Left cardiac atrium (tissue), 4 donors: ENCODE measurements at regions of chr13 and their contacts with region 1.

Region 1: GRCh38 chr13:40069173-40070044 is 413.9 kb downstream of the COG6 start:
- DNase-seq: peak; percentile 81
- ATAC-seq: peak; percentile 92 to 96

Region 2: GRCh38 chr13:40580566-40581276 is 511.3 kb after region 1 on chr13:
- intact Hi-C with region 1: loop called in 1 of 2 experiments (anchors 5 kb)
- DNase-seq: no peak
- ATAC-seq: no peak